GM12878 (cell line): ENCODE measurements at regions of chr5 and their contacts with region 1.

Region 1: DNA sequence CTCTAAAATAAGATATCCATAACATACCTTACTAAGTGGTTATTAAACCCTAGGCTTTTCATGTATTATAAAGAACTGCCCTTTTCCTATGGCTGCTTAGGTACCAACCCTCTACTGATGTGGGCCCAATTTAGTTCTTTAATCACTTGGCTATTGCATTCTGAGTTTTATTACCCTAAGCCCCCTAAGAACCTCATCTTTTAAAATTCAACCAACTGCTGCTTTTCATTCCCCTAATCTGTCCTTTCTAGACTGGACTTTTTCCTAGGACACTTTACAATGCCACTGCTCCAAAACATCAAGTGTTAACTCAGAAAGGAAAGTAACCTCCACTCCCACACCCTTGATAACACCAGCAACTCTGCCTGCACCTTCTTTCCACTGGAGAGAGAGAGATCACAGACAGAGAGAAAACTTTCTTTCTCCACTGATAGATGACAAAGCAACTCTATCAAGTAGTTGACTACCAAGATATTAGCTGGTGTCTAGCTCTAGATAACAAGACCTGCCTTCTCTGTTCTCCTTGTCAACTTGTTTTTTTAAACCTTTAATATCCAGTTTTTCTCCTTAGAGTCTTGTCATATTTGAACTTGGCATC is 27.3 kb downstream of the ELL2 start:
- DNase-seq: no peak
- ATAC-seq: peak; percentile 43
- H3K4me3 ChIP-seq: no peak overlapping the region
- H3K27ac ChIP-seq: no peak overlapping the region
- H3K4me1 ChIP-seq: peaks cover 34% of the 10 kb centered on the region
- H3K27me3 ChIP-seq: no peaks in the 10 kb centered on the region
- CTCF ChIP-seq: no peak
- EP300 ChIP-seq: no peak
- POLR2A ChIP-seq: no peak
- RAD21 ChIP-seq: no peak

Region 2: GRCh38 chr5:95907067-95907705 is 27.1 kb before region 1 on chr5:
- CTCF ChIA-PET with region 1: interaction called, 3 read pairs
- POLR2A ChIA-PET with region 1: interaction called, 4 read pairs
- RAD21 ChIA-PET with region 1: interaction called, 11 read pairs
- SMC1A ChIA-PET with region 1: interaction called, 13 read pairs
- in situ Hi-C with region 1: no loop called
- intact Hi-C with region 1: no loop called
- DNase-seq: no peak
- ATAC-seq: peak; percentile 76
- H3K4me3 ChIP-seq: no peak overlapping the region
- H3K27ac ChIP-seq: peak overlapping the region; percentile 11; the same call in 1 of the 2 replicates
- H3K4me1 ChIP-seq: peaks cover 11% of the 10 kb centered on the region
- H3K27me3 ChIP-seq: no peaks in the 10 kb centered on the region
- CTCF ChIP-seq: no peak
- EP300 ChIP-seq: no peak
- POLR2A ChIP-seq: no peak
- RAD21 ChIP-seq: no peak

Region 3: GRCh38 chr5:95915999-95916686 is 18.2 kb before region 1 on chr5:
- CTCF ChIA-PET with region 1: interaction called, 6 read pairs
- POLR2A ChIA-PET with region 1: interaction called, 5 read pairs
- RAD21 ChIA-PET with region 1: interaction called, 12 read pairs
- SMC1A ChIA-PET with region 1: interaction called, 14 read pairs
- in situ Hi-C with region 1: no loop called
- intact Hi-C with region 1: no loop called
- DNase-seq: no peak
- ATAC-seq: peak; percentile 79
- H3K4me3 ChIP-seq: no peak overlapping the region
- H3K27ac ChIP-seq: peak overlapping the region; percentile 20; the same call in 1 of the 2 replicates
- H3K4me1 ChIP-seq: peaks cover 38% of the 10 kb centered on the region
- H3K27me3 ChIP-seq: no peaks in the 10 kb centered on the region
- CTCF ChIP-seq: no peak
- EP300 ChIP-seq: no peak
- POLR2A ChIP-seq: no peak
- RAD21 ChIP-seq: no peak